Naive thymus-derived CD4-positive, alpha-beta T cell (primary cell): ENCODE measurements at regions of chr5 and their contacts with region 1.

Region 1: GRCh38 chr5:77379558-77380061 is 112.5 kb downstream of the WDR41 start:
- DNase-seq: peak in 8 of 9 donors; percentile 42 to 81 (median 64)
- ATAC-seq: peak; percentile 93
- H3K4me3 ChIP-seq: no peak overlapping the region
- H3K4me3 Mint-ChIP-seq: peak overlapping the region in 9 of 10 donors; percentile 6 to 60 (median 16)
- H3K27ac ChIP-seq: no peak overlapping the region
- H3K27ac Mint-ChIP-seq: peak overlapping the region; percentile 73 to 90 (median 82)
- H3K4me1 ChIP-seq: peaks cover 0 to 18% of the 10 kb centered on the region in 2 donors
- H3K4me1 Mint-ChIP-seq: peaks cover 13 to 29% (median 28%) of the 10 kb centered on the region in 7 donors
- H3K27me3 ChIP-seq: no peaks in the 10 kb centered on the region
- H3K27me3 Mint-ChIP-seq: peaks cover 0 to 5% (median 0%) of the 10 kb centered on the region in 5 donors

Region 2: GRCh38 chr5:77328930-77329647 is 50.5 kb before region 1 on chr5:
- CTCF ChIA-PET with region 1: no interaction called
- POLR2A ChIA-PET with region 1: no interaction called
- intact Hi-C with region 1: loop called in 1 of 2 experiments (anchors 1 kb)
- DNase-seq: no peak
- ATAC-seq: peak; percentile 20
- H3K4me3 ChIP-seq: no peak overlapping the region
- H3K4me3 Mint-ChIP-seq: peak overlapping the region in 1 of 10 donors; percentile 70
- H3K27ac ChIP-seq: no peak overlapping the region
- H3K27ac Mint-ChIP-seq: peak overlapping the region in 2 of 9 donors; percentile 68 to 70
- H3K4me1 ChIP-seq: no peaks in the 10 kb centered on the region
- H3K4me1 Mint-ChIP-seq: peaks cover 4 to 33% (median 13%) of the 10 kb centered on the region in 7 donors
- H3K27me3 ChIP-seq: no peaks in the 10 kb centered on the region
- H3K27me3 Mint-ChIP-seq: peaks cover 0 to 9% (median 8%) of the 10 kb centered on the region in 5 donors

Region 3: GRCh38 chr5:77356740-77357139 is 22.9 kb before region 1 on chr5:
- CTCF ChIA-PET with region 1: no interaction called
- POLR2A ChIA-PET with region 1: no interaction called
- intact Hi-C with region 1: loop called in 1 of 2 experiments (anchors 2 kb)
- DNase-seq: peak in 1 of 9 donors; percentile 34
- ATAC-seq: no peak
- H3K4me3 ChIP-seq: no peak overlapping the region
- H3K4me3 Mint-ChIP-seq: no peak overlapping the region
- H3K27ac ChIP-seq: no peak overlapping the region
- H3K27ac Mint-ChIP-seq: peak overlapping the region in 1 of 9 donors; percentile 26
- H3K4me1 ChIP-seq: no peaks in the 10 kb centered on the region
- H3K4me1 Mint-ChIP-seq: peaks cover 0 to 15% (median 0%) of the 10 kb centered on the region in 7 donors
- H3K27me3 ChIP-seq: no peaks in the 10 kb centered on the region
- H3K27me3 Mint-ChIP-seq: peaks cover 0 to 8% (median 0%) of the 10 kb centered on the region in 5 donors